Posterior vena cava (tissue), 2 donors: ENCODE measurements at regions of chr12 and their contacts with region 1.

Region 1: DNA sequence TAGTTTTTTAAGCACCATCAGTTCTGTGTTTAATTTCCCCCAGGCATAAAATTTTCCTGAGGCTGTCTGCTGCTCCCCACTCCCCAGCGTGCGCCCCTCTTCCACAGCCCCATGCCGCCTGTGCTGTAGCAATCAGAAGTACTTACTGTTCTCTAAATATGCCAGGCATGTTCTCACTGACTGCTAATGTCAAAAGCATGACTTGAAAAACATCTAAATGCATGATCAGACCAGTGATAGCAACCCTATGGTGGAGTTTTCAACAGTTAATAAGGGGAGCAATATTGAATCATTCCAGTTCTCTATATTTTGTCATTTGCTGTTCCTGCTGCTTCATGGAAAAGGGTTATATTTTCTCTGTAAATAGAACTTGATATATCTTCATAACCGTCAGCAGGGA is 77.5 kb downstream of the ANKS1B start:
- DNase-seq: no peak

Region 2: DNA sequence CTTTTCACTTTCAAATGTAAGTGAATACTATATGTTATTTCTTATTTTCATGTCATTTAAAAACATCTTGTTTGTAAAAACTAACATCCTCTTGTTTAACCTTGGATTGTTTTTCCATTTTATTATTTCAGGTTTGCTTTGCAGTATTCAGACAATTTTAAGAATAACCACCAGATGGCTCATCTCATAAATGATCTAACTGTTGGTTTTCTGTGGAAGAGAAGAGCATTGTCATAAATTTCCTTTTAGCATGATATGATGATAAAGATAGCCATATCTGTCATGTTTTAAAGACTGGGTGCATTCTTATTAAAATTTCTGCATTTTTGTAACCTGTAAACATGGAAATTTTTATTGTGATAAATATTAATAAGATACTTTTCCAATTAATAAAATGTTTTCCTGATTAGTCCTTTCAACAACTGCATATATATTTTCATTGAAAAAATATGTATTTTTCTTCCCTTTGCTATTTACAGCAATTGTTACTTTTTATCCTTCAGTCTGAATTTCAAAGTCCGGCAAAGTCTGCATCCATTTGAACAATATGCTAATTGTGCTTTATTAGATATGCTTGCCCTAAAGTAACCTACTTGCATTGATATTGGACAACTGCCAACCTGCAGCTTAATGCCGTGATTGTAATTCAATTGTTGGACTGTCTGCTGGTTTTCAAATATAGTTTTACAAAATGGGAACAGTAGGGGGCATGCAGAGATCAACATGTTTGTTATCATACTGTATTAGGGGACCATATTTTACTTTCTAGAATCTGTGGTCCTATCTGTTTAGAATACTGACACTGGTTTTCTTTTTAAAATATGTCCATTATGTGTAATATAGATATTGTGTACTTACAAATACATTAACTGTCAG is 96.3 kb before region 1 on chr12:
- intact Hi-C with region 1: loop called in 1 of 2 experiments (anchors 5 kb)
- DNase-seq: no peak

Region 3: DNA sequence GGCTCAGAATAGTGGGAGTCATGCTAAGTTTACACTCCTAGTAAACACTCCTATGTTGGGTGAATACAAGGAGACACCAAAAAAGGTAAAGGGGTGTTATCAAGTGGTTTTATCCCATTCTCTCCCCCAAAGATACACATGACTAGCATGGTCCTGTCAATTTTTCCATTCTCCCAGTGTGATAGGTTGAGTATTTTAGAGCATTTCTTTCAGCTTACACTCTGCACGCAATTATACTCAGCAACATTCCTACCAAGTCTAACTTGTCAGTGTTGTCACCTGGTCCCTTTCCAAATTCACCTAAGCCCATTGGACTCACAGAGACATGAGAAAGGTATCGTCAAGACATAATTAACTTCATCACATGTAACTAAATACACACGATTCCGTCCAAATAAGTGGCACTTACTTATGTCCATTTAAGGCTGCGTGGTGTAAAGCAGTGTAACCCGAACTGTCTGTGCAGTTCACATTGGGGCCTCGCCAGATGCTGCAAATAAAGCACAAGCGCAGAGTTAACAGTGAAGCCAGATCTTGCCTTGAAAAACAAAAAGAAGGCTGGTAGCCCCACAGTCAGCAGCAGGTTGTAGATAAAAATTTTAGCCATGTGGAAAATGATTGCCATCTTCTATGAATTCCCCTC is 82.2 kb before region 1 on chr12:
- intact Hi-C with region 1: loop called in 1 of 2 experiments (anchors 10 kb)
- DNase-seq: no peak

Region 4: GRCh38 chr12:99842308-99842707 is 64.9 kb before region 1 on chr12:
- intact Hi-C with region 1: no loop called
- DNase-seq: no peak

Region 5: GRCh38 chr12:99861731-99862130 is 45.5 kb before region 1 on chr12:
- intact Hi-C with region 1: no loop called
- DNase-seq: no peak

Region 6: GRCh38 chr12:99935608-99936007 is 28.4 kb after region 1 on chr12:
- intact Hi-C with region 1: no loop called
- DNase-seq: no peak